CD8-positive, alpha-beta memory T cell (primary cell): ENCODE measurements at regions of chr5 and their contacts with region 1.

Region 1: DNA sequence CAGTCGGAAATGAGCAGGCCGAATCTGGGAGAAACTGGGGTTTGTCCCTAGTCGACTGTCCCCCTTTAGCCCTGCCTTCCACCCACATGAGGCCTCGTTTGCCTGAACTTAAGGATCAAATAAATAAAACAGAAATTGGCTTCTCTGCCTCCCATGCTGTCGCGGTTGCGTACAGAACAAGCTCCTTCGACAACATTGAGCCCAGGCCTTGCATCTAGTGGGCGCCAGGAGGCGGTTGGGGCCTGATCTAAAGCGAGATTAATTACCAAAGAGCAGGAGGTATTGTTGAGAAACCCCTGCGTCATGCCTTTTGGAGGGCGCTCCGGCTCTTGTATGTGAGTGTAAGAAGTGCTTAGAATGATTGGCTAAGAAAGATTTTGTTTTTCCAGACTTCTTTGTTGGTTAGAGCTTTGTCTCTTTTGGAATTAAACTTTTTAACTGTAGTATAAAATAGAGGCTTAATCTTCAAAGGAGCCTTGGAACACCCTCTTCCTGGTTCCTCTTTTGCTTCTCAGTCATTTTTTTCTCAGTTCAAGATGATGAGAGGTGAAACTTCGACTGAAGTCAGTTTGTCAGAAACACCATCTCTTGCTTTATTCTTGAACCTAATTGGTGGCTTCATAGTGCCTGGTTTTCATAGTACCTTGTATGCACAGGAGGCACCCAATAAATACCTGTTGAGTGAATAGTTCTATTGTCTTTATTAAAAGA is 827 bp downstream of the ATP6V0E1 start:
- DNase-seq: peak; percentile 53 to 85 (median 73)
- H3K4me3 ChIP-seq: peak overlapping the region; percentile 98
- H3K4me3 Mint-ChIP-seq: peak overlapping the region; percentile 89 to 99 (median 98)
- H3K27ac ChIP-seq: peak overlapping the region; percentile 97
- H3K27ac Mint-ChIP-seq: peak overlapping the region; percentile 84 to 100 (median 99)
- H3K4me1 ChIP-seq: peaks cover 29% of the 10 kb centered on the region
- H3K4me1 Mint-ChIP-seq: peaks cover 41 to 69% (median 43%) of the 10 kb centered on the region in 3 donors
- H3K27me3 ChIP-seq: no peaks in the 10 kb centered on the region
- H3K27me3 Mint-ChIP-seq: no peaks in the 10 kb centered on the region

Region 2: GRCh38 chr5:172958331-172959046 is 25.9 kb before region 1 on chr5:
- CTCF ChIA-PET with region 1: interaction called, 9 read pairs
- POLR2A ChIA-PET with region 1: interaction called, 17 read pairs
- DNase-seq: peak; percentile 53 to 73 (median 64)
- H3K4me3 ChIP-seq: peak overlapping the region; percentile 98
- H3K4me3 Mint-ChIP-seq: peak overlapping the region; percentile 95 to 99 (median 96)
- H3K27ac ChIP-seq: peak overlapping the region; percentile 77
- H3K27ac Mint-ChIP-seq: peak overlapping the region; percentile 96 to 99 (median 98)
- H3K4me1 ChIP-seq: peaks cover 18% of the 10 kb centered on the region
- H3K4me1 Mint-ChIP-seq: peaks cover 33 to 43% (median 43%) of the 10 kb centered on the region in 3 donors
- H3K27me3 ChIP-seq: no peaks in the 10 kb centered on the region
- H3K27me3 Mint-ChIP-seq: peaks cover 0 to 2% of the 10 kb centered on the region in 2 donors

Region 3: GRCh38 chr5:173057062-173057924 is 72.9 kb after region 1 on chr5:
- CTCF ChIA-PET with region 1: interaction called, 8 read pairs
- POLR2A ChIA-PET with region 1: interaction called, 28 read pairs
- DNase-seq: peak; percentile 96 to 98 (median 98)
- H3K4me3 ChIP-seq: peak overlapping the region; percentile 80
- H3K4me3 Mint-ChIP-seq: peak overlapping the region; percentile 95 to 97 (median 96)
- H3K27ac ChIP-seq: peak overlapping the region; percentile 83
- H3K27ac Mint-ChIP-seq: peak overlapping the region; percentile 88 to 96 (median 94)
- H3K4me1 ChIP-seq: peaks cover 32% of the 10 kb centered on the region
- H3K4me1 Mint-ChIP-seq: peaks cover 36 to 60% (median 49%) of the 10 kb centered on the region in 3 donors
- H3K27me3 ChIP-seq: no peaks in the 10 kb centered on the region
- H3K27me3 Mint-ChIP-seq: peaks cover 2 to 7% of the 10 kb centered on the region in 2 donors

Region 4: GRCh38 chr5:173144200-173145176 is 160.1 kb after region 1 on chr5 and contains the start of gene BNIP1:
- CTCF ChIA-PET with region 1: interaction called, 16 read pairs
- POLR2A ChIA-PET with region 1: interaction called, 20 read pairs
- DNase-seq: peak; percentile 93 to 97 (median 96)
- H3K4me3 ChIP-seq: peak within 1 kb of the TSS; percentile 100
- H3K4me3 Mint-ChIP-seq: peak within 1 kb of the TSS; percentile 93 to 100 (median 99)
- H3K27ac ChIP-seq: peak within 1 kb of the TSS; percentile 100
- H3K27ac Mint-ChIP-seq: peak within 1 kb of the TSS; percentile 92 to 100 (median 99)
- H3K4me1 ChIP-seq: peaks cover 4% of the 10 kb centered on the region
- H3K4me1 Mint-ChIP-seq: peaks cover 10 to 24% (median 23%) of the 10 kb centered on the region in 3 donors
- H3K27me3 ChIP-seq: no peaks in the 10 kb centered on the region
- H3K27me3 Mint-ChIP-seq: peaks cover 0 to 3% of the 10 kb centered on the region in 2 donors
- total RNA-seq, gene BNIP1: 25.5 to 26.5 TPM